ENCODE measurements at regions of chr1 and their contacts with region 1.

Region 1: DNA sequence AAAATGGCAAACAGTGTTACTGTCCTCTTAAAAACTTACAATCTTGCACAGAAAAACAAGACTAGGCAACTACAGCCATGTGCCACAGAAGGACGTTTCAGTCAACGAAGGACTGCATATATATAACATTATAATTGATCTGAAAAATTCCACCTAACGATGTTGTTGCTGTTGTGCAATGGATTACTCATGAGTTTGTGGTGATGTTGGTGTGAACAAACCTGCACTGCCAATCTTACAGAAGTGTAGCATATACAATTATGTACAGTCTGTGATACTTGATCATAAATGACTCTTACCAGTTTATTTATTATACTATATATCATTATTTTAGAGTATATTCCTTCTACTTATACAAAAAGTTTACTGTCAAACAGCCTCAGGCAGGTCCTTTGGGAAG is 6.8 kb upstream of the VAMP4 start:
- DNase-seq: no peak
- ATAC-seq: no peak
- H3K4me3 ChIP-seq: no peak overlapping the region
- H3K4me3 Mint-ChIP-seq: no peak overlapping the region
- H3K27ac ChIP-seq: no peak overlapping the region
- H3K27ac Mint-ChIP-seq: no peak overlapping the region
- H3K4me1 ChIP-seq: no peaks in the 10 kb centered on the region
- H3K4me1 Mint-ChIP-seq: peaks cover 6 to 8% (median 7%) of the 10 kb centered on the region in 3 donors
- H3K27me3 ChIP-seq: peaks cover 0 to 4% of the 10 kb centered on the region in 2 experiments
- H3K27me3 Mint-ChIP-seq: no peaks in the 10 kb centered on the region

Region 2: GRCh38 chr1:171160211-171160610 is 588.4 kb before region 1 on chr1:
- CTCF ChIA-PET with region 1: no interaction called
- POLR2A ChIA-PET with region 1: no interaction called
- DNase-seq: no peak
- ATAC-seq: no peak
- H3K4me3 ChIP-seq: no peak overlapping the region
- H3K4me3 Mint-ChIP-seq: no peak overlapping the region
- H3K27ac ChIP-seq: no peak overlapping the region
- H3K27ac Mint-ChIP-seq: no peak overlapping the region
- H3K4me1 ChIP-seq: no peaks in the 10 kb centered on the region
- H3K4me1 Mint-ChIP-seq: no peaks in the 10 kb centered on the region
- H3K27me3 ChIP-seq: no peaks in the 10 kb centered on the region
- H3K27me3 Mint-ChIP-seq: peaks cover 0 to 9% of the 10 kb centered on the region in 2 donors

Region 3: GRCh38 chr1:171781176-171781875 is 32.7 kb after region 1 on chr1 and contains the start of gene METTL13:
- CTCF ChIA-PET with region 1: interaction called, 9 to 10 read pairs
- POLR2A ChIA-PET with region 1: interaction called in 1 of 2 experiments, 10 read pairs
- DNase-seq: peak; percentile 95 to 100 (median 98)
- ATAC-seq: peak; percentile 91 to 96 (median 94)
- H3K4me3 ChIP-seq: peak within 1 kb of the TSS; percentile 94 to 97
- H3K4me3 Mint-ChIP-seq: peak within 1 kb of the TSS; percentile 97 to 100 (median 98)
- H3K27ac ChIP-seq: peak within 1 kb of the TSS; percentile 84
- H3K27ac Mint-ChIP-seq: peak within 1 kb of the TSS; percentile 93 to 99
- H3K4me1 ChIP-seq: peaks cover 17 to 44% of the 10 kb centered on the region in 2 experiments
- H3K4me1 Mint-ChIP-seq: peaks cover 56 to 61% (median 60%) of the 10 kb centered on the region in 3 donors
- H3K27me3 ChIP-seq: no peaks in the 10 kb centered on the region
- H3K27me3 Mint-ChIP-seq: no peaks in the 10 kb centered on the region
- total RNA-seq, gene METTL13: 16.0 to 37.6 (median 35.2) TPM